ENCODE measurements at regions of chr6 and their contacts with region 1.

Region 1: GRCh38 chr6:144215932-144216667 is 65.8 kb downstream of the STX11 start:
- DNase-seq: peak; percentile 100
- H3K4me3 ChIP-seq: peak overlapping the region; percentile 35 to 56 (median 45)
- H3K27ac ChIP-seq: peak overlapping the region; percentile 17
- H3K4me1 ChIP-seq: peaks cover 14% of the 10 kb centered on the region
- H3K27me3 ChIP-seq: no peaks in the 10 kb centered on the region
- CTCF ChIP-seq: peak; percentile 81 to 85
- POLR2A ChIP-seq: peak; percentile 50

Region 2: DNA sequence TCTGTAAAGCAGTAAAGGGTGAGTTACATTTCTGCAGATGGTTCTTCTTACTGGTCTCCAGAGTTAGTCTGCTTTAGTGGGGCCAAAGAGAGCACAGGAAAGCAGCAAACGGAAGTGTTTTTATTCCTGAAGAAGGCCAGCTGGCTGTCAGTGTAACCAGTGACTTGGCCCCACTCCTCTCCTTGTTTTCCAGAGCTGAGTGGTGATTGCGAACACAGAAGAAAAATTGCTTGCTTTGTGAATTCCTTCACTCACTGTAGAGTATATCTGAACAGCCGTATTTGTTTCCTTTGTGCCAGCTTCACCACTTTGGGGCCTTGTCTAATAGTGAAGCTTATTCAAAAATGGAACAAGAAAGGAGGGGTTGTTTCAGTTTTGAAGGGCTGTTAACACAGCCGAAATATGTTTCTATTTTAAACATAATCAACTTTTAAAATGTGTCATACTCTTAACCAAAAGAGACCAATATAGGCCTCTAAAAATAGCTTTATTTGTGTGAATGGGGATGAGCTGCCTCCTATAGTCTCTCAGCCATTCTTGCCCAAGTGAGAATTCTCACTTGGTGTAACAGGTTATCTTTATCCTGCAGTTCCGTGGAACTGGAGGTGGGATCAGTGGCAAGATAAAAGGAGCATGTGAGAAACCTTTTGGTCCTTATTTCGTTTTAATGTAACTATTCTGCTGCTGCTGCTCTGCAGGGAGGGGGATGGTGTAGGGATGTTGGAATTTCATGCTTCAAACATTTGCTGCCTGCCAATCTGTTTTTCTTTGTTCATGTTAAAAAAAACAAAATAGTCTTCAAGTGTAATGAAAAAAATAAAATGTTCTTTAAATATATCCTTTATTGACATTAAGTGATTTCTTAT is 314.0 kb before region 1 on chr6:
- CTCF ChIA-PET with region 1: no interaction called
- POLR2A ChIA-PET with region 1: no interaction called
- dilution Hi-C with region 1: no loop called
- intact Hi-C with region 1: no loop called
- DNase-seq: peak; percentile 67
- H3K4me3 ChIP-seq: no peak overlapping the region
- H3K27ac ChIP-seq: no peak overlapping the region
- H3K4me1 ChIP-seq: no peaks in the 10 kb centered on the region
- H3K27me3 ChIP-seq: peaks cover 0 to 2% of the 10 kb centered on the region in 2 experiments
- CTCF ChIP-seq: no peak
- POLR2A ChIP-seq: no peak

Region 3: DNA sequence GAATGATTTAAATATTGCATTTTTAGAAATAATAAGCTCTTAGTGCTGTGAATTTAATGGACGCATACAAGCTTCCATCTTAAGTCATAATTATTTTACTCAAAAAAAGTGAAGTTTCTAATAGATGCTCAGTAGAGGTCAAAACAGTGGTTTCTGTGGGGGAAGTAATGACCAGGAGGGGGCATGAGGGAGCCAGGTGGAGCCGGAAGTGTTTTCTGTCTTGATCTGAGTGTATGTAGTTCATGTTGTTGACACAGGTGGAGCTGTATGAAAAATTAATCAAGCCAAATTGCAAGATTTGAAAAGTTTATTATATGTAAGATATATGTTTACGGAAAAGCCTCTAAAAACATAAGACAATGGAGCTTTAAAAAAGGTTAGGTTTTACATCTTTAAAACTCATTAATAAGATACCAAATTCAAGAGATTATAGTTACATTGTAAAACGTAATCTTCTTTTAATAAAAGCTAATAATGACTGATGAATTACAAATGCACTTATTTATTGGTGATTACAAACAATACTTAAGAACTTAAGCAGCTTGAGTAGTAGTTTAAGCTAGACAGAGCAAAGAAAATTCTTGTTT is 276.0 kb before region 1 on chr6:
- CTCF ChIA-PET with region 1: no interaction called
- POLR2A ChIA-PET with region 1: no interaction called
- dilution Hi-C with region 1: no loop called
- intact Hi-C with region 1: loop called (anchors 1 kb)
- DNase-seq: peak; percentile 45
- H3K4me3 ChIP-seq: no peak overlapping the region
- H3K27ac ChIP-seq: no peak overlapping the region
- H3K4me1 ChIP-seq: no peaks in the 10 kb centered on the region
- H3K27me3 ChIP-seq: peaks cover under 1 to 7% of the 10 kb centered on the region in 2 experiments
- CTCF ChIP-seq: peak; percentile 59 to 60
- POLR2A ChIP-seq: no peak

Region 4: GRCh38 chr6:144095331-144096002 is 120.6 kb before region 1 on chr6 and contains the start of gene SF3B5:
- CTCF ChIA-PET with region 1: interaction called, 22 read pairs
- POLR2A ChIA-PET with region 1: no interaction called
- dilution Hi-C with region 1: no loop called
- intact Hi-C with region 1: loop called (anchors 1 kb)
- DNase-seq: peak; percentile 100
- H3K4me3 ChIP-seq: peak within 1 kb of the TSS; percentile 44 to 74 (median 67)
- H3K27ac ChIP-seq: peak within 1 kb of the TSS; percentile 30
- H3K4me1 ChIP-seq: peaks cover 13% of the 10 kb centered on the region
- H3K27me3 ChIP-seq: peaks cover 0 to 9% of the 10 kb centered on the region in 2 experiments
- CTCF ChIP-seq: no peak
- POLR2A ChIP-seq: peak; percentile 92
- total RNA-seq, gene SF3B5: 170 and 185 TPM in 2 replicates

Region 5: GRCh38 chr6:144158133-144158532 is 58.0 kb before region 1 on chr6:
- CTCF ChIA-PET with region 1: interaction called, 10 read pairs
- POLR2A ChIA-PET with region 1: interaction called, 3 read pairs
- dilution Hi-C with region 1: no loop called
- intact Hi-C with region 1: loop called (anchors 1 kb)
- DNase-seq: peak; percentile 79
- H3K4me3 ChIP-seq: no peak overlapping the region
- H3K27ac ChIP-seq: peak overlapping the region; percentile 93
- H3K4me1 ChIP-seq: peaks cover 32% of the 10 kb centered on the region
- H3K27me3 ChIP-seq: no peaks in the 10 kb centered on the region
- CTCF ChIP-seq: no peak
- POLR2A ChIP-seq: no peak

Region 6: GRCh38 chr6:144349690-144350527 is 133.8 kb after region 1 on chr6:
- CTCF ChIA-PET with region 1: interaction called, 4 read pairs
- POLR2A ChIA-PET with region 1: no interaction called
- dilution Hi-C with region 1: no loop called
- intact Hi-C with region 1: loop called (anchors 1 kb)
- DNase-seq: peak; percentile 100
- H3K4me3 ChIP-seq: peak overlapping the region in 2 of 3 experiments; percentile 28 to 74
- H3K27ac ChIP-seq: peak overlapping the region; percentile 90
- H3K4me1 ChIP-seq: peaks cover 69% of the 10 kb centered on the region
- H3K27me3 ChIP-seq: no peaks in the 10 kb centered on the region
- CTCF ChIP-seq: no peak
- POLR2A ChIP-seq: peak; percentile 61

Region 7: GRCh38 chr6:144482142-144482541 is 266.0 kb after region 1 on chr6:
- CTCF ChIA-PET with region 1: interaction called, 23 read pairs
- POLR2A ChIA-PET with region 1: no interaction called
- dilution Hi-C with region 1: no loop called
- intact Hi-C with region 1: loop called (anchors 1 kb)
- DNase-seq: peak; percentile 84
- H3K4me3 ChIP-seq: no peak overlapping the region
- H3K27ac ChIP-seq: no peak overlapping the region
- H3K4me1 ChIP-seq: no peaks in the 10 kb centered on the region
- H3K27me3 ChIP-seq: no peaks in the 10 kb centered on the region
- CTCF ChIP-seq: peak; percentile 70 to 71
- POLR2A ChIP-seq: no peak

Region 8: DNA sequence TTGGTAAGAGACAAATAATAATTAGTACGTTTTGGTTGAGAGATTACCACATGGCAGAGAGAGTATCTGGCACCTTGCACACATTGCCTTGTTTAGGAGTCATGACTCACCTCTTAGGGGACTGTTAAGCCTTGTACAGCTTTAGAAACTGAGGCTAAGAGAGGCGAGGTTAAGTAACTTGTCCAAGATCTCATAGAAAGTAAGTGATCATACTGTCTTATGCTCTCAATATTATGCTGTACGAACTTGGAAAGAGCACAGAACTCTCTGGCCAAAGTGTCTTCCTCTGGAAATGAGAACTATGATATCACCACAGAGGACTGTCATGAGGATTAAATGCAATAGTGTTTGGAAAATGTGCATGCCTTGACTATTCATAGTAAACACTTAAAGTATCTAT is 318.1 kb after region 1 on chr6:
- CTCF ChIA-PET with region 1: no interaction called
- POLR2A ChIA-PET with region 1: no interaction called
- dilution Hi-C with region 1: no loop called
- intact Hi-C with region 1: no loop called
- DNase-seq: no peak
- H3K4me3 ChIP-seq: no peak overlapping the region
- H3K27ac ChIP-seq: no peak overlapping the region
- H3K4me1 ChIP-seq: no peaks in the 10 kb centered on the region
- H3K27me3 ChIP-seq: no peaks in the 10 kb centered on the region
- CTCF ChIP-seq: no peak
- POLR2A ChIP-seq: no peak

Measured in endothelial cell of umbilical vein (primary cell).